ENCODE measurements at regions of chr5 and their contacts with region 1.

Region 1: GRCh38 chr5:141849375-141850243 is 28.6 kb downstream of the PCDH1 start:
- DNase-seq: peak; percentile 94 to 95
- H3K4me3 ChIP-seq: peak overlapping the region; percentile 79
- H3K4me3 Mint-ChIP-seq: peak overlapping the region; percentile 79
- H3K27ac Mint-ChIP-seq: peak overlapping the region; percentile 69
- H3K4me1 ChIP-seq: peaks cover 30% of the 10 kb centered on the region
- H3K4me1 Mint-ChIP-seq: peaks cover 24% of the 10 kb centered on the region
- H3K27me3 ChIP-seq: no peaks in the 10 kb centered on the region
- H3K27me3 Mint-ChIP-seq: no peaks in the 10 kb centered on the region
- CTCF ChIP-seq: no peak

Region 2: GRCh38 chr5:141825791-141826560 is 23.6 kb before region 1 on chr5:
- CTCF ChIA-PET with region 1: interaction called, 3 read pairs
- POLR2A ChIA-PET with region 1: no interaction called
- intact Hi-C with region 1: loop called (anchors 2 kb)
- DNase-seq: peak in 1 of 2 experiments; percentile 28
- H3K4me3 ChIP-seq: no peak overlapping the region
- H3K4me3 Mint-ChIP-seq: no peak overlapping the region
- H3K27ac Mint-ChIP-seq: no peak overlapping the region
- H3K4me1 ChIP-seq: no peaks in the 10 kb centered on the region
- H3K4me1 Mint-ChIP-seq: no peaks in the 10 kb centered on the region
- H3K27me3 ChIP-seq: no peaks in the 10 kb centered on the region
- H3K27me3 Mint-ChIP-seq: peaks cover 7% of the 10 kb centered on the region
- CTCF ChIP-seq: peak in 1 of 2 experiments; percentile 24